GM10248 (cell line): ENCODE measurements at regions of chr12 and their contacts with region 1.

Region 1: GRCh38 chr12:69044887-69045286 is 111.9 kb upstream of the CPM start:
- DNase-seq: no peak
- CTCF ChIP-seq: no peak

Region 2: DNA sequence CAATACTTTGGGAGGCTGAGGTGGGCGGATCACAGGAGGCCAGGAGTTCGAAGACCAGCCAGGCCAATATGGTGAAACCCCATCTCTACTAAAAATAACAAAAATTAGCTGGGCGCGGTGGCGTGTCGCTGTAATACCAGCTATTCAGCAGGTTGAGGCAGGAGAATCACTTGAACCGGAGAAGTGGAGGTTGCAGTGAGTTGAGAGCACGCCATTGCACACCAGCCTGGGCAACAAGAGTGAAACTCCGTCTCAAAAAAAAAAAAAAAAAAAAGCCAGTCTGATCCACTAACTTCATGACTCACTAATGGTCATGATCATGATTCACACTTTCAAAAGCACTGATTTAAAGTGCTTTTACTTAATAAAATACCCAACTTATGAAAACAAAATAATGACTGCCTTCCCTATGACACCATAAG is 73.5 kb before region 1 on chr12:
- CTCF ChIA-PET with region 1: no interaction called
- POLR2A ChIA-PET with region 1: no interaction called
- DNase-seq: no peak
- CTCF ChIP-seq: no peak

Region 3: GRCh38 chr12:69030321-69030720 is 14.6 kb before region 1 on chr12:
- CTCF ChIA-PET with region 1: interaction called, 10 read pairs
- POLR2A ChIA-PET with region 1: no interaction called
- DNase-seq: no peak
- CTCF ChIP-seq: no peak